GM12878 (cell line): ENCODE measurements at regions of chr2 and their contacts with region 1.

Region 1: GRCh38 chr2:219029829-219030165 is 11.5 kb downstream of the CFAP65 start:
- DNase-seq: no peak
- ATAC-seq: peak; percentile 97
- H3K4me3 ChIP-seq: no peak overlapping the region
- H3K27ac ChIP-seq: no peak overlapping the region
- H3K4me1 ChIP-seq: no peaks in the 10 kb centered on the region
- H3K27me3 ChIP-seq: no peaks in the 10 kb centered on the region; a peak in 2 of 4 replicates
- CTCF ChIP-seq: peak; percentile 92 to 98 (median 93)
- EP300 ChIP-seq: no peak
- POLR2A ChIP-seq: no peak
- RAD21 ChIP-seq: peak; percentile 82

Region 2: DNA sequence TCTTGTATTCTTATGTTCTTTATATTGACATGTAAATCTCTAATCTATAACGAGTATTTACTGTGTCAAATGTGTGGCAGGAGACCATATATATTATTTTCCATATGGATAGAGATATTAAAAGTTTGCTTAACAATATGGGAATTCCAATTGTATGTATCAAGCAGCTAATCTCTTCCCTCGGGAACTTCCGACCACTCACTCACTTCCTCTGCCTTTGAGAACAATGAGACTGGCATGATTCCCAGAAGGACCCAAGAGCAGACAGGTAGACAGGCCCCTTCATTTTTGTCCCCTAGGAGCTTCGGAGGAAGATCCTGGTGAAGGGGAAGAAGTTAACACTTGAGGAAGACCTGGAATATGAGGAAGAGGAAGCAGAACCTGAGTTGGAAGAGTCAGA is 398.0 kb before region 1 on chr2:
- CTCF ChIA-PET with region 1: no interaction called
- POLR2A ChIA-PET with region 1: no interaction called
- RAD21 ChIA-PET with region 1: no interaction called
- SMC1A ChIA-PET with region 1: no interaction called
- in situ Hi-C with region 1: no loop called
- intact Hi-C with region 1: no loop called
- DNase-seq: no peak
- ATAC-seq: no peak
- H3K4me3 ChIP-seq: no peak overlapping the region
- H3K27ac ChIP-seq: no peak overlapping the region
- H3K4me1 ChIP-seq: no peaks in the 10 kb centered on the region
- H3K27me3 ChIP-seq: no peaks in the 10 kb centered on the region
- CTCF ChIP-seq: no peak
- EP300 ChIP-seq: no peak
- POLR2A ChIP-seq: no peak
- RAD21 ChIP-seq: no peak

Region 3: DNA sequence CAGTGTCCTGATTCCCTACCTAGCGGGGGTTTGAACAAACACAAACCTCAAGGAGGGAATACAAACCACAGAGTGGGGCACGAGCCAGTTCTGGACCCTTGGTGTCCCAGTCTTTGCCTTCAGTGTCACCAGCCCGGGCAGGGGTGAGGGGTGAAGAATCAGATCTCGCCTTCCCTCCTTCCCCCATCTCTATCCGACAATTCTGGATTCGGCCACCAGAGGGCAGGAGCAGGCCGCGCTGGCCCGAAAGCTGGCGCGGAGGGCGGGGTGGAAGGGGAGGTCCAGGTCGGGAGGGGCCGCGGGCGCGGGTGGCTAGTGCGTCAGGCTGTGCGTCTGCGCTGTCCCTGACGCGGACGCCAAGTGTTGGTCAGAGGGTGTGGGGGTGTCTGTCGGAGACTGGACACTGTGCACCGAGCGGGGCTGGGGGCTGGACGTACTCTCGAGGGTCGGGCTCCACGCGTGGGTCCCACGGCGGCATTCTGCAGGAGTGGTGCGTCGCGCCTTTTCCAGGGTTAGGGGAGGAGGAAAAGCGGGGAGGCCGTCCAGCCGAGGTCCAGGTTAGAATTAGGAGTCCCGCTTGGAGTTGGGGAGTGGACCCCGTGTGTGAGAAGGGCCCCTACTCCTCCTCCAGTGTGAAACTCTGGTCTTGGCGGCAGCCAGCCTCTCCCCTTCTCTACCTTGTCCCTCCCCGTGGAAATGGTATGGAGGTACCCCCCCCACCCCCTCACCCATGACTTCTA is 33.7 kb before region 1 on chr2:
- CTCF ChIA-PET with region 1: interaction called, 13 read pairs
- POLR2A ChIA-PET with region 1: no interaction called
- RAD21 ChIA-PET with region 1: interaction called, 4 read pairs
- SMC1A ChIA-PET with region 1: no interaction called
- in situ Hi-C with region 1: no loop called
- intact Hi-C with region 1: no loop called
- DNase-seq: no peak
- ATAC-seq: peak; percentile 90
- H3K4me3 ChIP-seq: no peak overlapping the region
- H3K27ac ChIP-seq: no peak overlapping the region
- H3K4me1 ChIP-seq: no peaks in the 10 kb centered on the region
- H3K27me3 ChIP-seq: peaks cover 22 to 32% of the 10 kb centered on the region in 2 experiments
- CTCF ChIP-seq: peak; percentile 78 to 88 (median 82)
- EP300 ChIP-seq: no peak
- POLR2A ChIP-seq: no peak
- RAD21 ChIP-seq: peak; percentile 72

Region 4: GRCh38 chr2:219073413-219074129 is 43.8 kb after region 1 on chr2:
- CTCF ChIA-PET with region 1: interaction called, 11 read pairs
- POLR2A ChIA-PET with region 1: no interaction called
- RAD21 ChIA-PET with region 1: interaction called, 5 read pairs
- SMC1A ChIA-PET with region 1: interaction called, 3 read pairs
- in situ Hi-C with region 1: no loop called
- intact Hi-C with region 1: no loop called
- DNase-seq: no peak
- ATAC-seq: peak; percentile 74
- H3K4me3 ChIP-seq: no peak overlapping the region
- H3K27ac ChIP-seq: no peak overlapping the region
- H3K4me1 ChIP-seq: no peaks in the 10 kb centered on the region
- H3K27me3 ChIP-seq: no peaks in the 10 kb centered on the region
- CTCF ChIP-seq: peak; percentile 48 to 62 (median 58)
- EP300 ChIP-seq: no peak
- POLR2A ChIP-seq: no peak
- RAD21 ChIP-seq: peak; percentile 59

Region 5: GRCh38 chr2:219104107-219105035 is 74.6 kb after region 1 on chr2:
- CTCF ChIA-PET with region 1: interaction called, 16 read pairs
- POLR2A ChIA-PET with region 1: no interaction called
- RAD21 ChIA-PET with region 1: interaction called, 4 read pairs
- SMC1A ChIA-PET with region 1: no interaction called
- in situ Hi-C with region 1: no loop called
- intact Hi-C with region 1: no loop called
- DNase-seq: no peak
- ATAC-seq: peak; percentile 97
- H3K4me3 ChIP-seq: no peak overlapping the region
- H3K27ac ChIP-seq: no peak overlapping the region
- H3K4me1 ChIP-seq: no peaks in the 10 kb centered on the region
- H3K27me3 ChIP-seq: no peaks in the 10 kb centered on the region
- CTCF ChIP-seq: peak; percentile 70 to 95 (median 90)
- EP300 ChIP-seq: no peak
- POLR2A ChIP-seq: no peak
- RAD21 ChIP-seq: peak; percentile 54

Region 6: DNA sequence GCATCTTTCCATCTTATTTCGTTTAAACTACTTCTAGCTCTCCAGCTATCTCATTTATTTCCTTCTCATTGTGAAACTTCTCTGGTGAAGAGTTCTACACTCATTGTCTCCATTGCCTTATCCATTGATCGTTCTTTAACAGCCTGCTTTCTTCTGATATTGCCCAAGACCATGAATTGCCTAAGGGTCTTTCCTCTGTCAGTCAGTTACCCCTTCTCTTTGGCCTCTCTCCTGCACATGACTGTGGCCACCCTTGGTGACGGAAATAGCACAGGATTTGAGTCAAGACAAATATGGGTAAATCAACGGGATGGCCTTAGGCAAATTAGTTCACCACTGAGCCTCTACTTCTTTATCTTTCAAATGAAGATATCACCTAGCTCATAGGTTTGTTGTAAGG is 104.2 kb after region 1 on chr2:
- CTCF ChIA-PET with region 1: interaction called, 10 read pairs
- POLR2A ChIA-PET with region 1: no interaction called
- RAD21 ChIA-PET with region 1: interaction called, 3 read pairs
- SMC1A ChIA-PET with region 1: no interaction called
- in situ Hi-C with region 1: no loop called
- intact Hi-C with region 1: no loop called
- DNase-seq: no peak
- ATAC-seq: no peak
- H3K4me3 ChIP-seq: no peak overlapping the region
- H3K27ac ChIP-seq: no peak overlapping the region
- H3K4me1 ChIP-seq: no peaks in the 10 kb centered on the region
- H3K27me3 ChIP-seq: no peaks in the 10 kb centered on the region
- CTCF ChIP-seq: no peak
- EP300 ChIP-seq: no peak
- POLR2A ChIP-seq: no peak
- RAD21 ChIP-seq: no peak

Region 7: DNA sequence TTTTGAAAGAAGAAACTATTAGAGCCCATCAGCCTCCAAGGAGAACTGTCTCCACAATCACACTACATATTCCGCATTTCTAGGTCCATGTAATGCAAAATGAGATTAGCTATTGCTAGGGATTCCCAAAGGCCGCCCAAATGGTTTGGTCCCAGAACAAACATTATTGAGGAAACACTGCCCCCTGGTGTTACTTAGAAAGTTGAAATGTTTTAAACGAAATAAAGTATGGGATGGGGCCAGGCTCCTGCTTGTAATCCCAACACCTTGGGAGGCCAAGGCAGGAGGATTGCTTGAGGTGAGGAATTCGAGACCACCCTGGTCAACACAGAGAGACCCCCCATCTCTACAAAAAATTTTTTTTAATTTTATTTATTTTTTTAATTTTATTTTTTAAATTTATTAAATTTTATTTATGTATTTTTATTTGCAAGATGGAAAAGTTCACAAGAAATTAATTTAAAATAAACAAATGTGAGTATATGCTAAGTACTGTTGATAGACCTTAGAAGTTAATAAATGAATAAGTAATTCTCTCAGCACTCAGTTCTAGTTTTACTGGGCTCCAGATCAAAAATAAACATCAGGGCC is 125.4 kb after region 1 on chr2:
- CTCF ChIA-PET with region 1: interaction called, 100 read pairs
- POLR2A ChIA-PET with region 1: no interaction called
- RAD21 ChIA-PET with region 1: interaction called, 41 read pairs
- SMC1A ChIA-PET with region 1: interaction called, 21 read pairs
- in situ Hi-C with region 1: no loop called
- intact Hi-C with region 1: loop called (anchors 1 kb)
- DNase-seq: no peak
- ATAC-seq: peak; percentile 77
- H3K4me3 ChIP-seq: no peak overlapping the region
- H3K27ac ChIP-seq: no peak overlapping the region
- H3K4me1 ChIP-seq: peaks cover 4% of the 10 kb centered on the region; the same call in 1 of the 2 replicates
- H3K27me3 ChIP-seq: no peaks in the 10 kb centered on the region
- CTCF ChIP-seq: peak; percentile 37 to 66 (median 39); a peak in 5 of 6 replicates
- EP300 ChIP-seq: no peak
- POLR2A ChIP-seq: no peak
- RAD21 ChIP-seq: peak; percentile 78